Activated CD4-positive, alpha-beta T cell treated with anti-CD3 and anti-CD28 coated beads, Interleukin-2, amount 10 ng/mL, durations not matched to agents 7 days and 5 days (primary cell): ENCODE measurements at regions of chr22 and their contacts with region 1.

Region 1: GRCh38 chr22:21629262-21630149 is at the start of gene YDJC:
- DNase-seq: peak; percentile 95
- H3K4me3 Mint-ChIP-seq: peak within 1 kb of the TSS; percentile 89
- H3K27ac Mint-ChIP-seq: peak within 1 kb of the TSS; percentile 96
- H3K4me1 Mint-ChIP-seq: peaks cover 42% of the 10 kb centered on the region
- H3K27me3 Mint-ChIP-seq: no peaks in the 10 kb centered on the region
- total RNA-seq, gene YDJC: 30.3 to 39.9 TPM

Region 2: GRCh38 chr22:21612865-21613265 is 16.6 kb before region 1 on chr22:
- CTCF ChIA-PET with region 1: interaction called, 24 read pairs
- POLR2A ChIA-PET with region 1: no interaction called
- DNase-seq: no peak
- H3K4me3 Mint-ChIP-seq: no peak overlapping the region
- H3K27ac Mint-ChIP-seq: no peak overlapping the region
- H3K4me1 Mint-ChIP-seq: peaks cover 2% of the 10 kb centered on the region
- H3K27me3 Mint-ChIP-seq: no peaks in the 10 kb centered on the region

Region 3: DNA sequence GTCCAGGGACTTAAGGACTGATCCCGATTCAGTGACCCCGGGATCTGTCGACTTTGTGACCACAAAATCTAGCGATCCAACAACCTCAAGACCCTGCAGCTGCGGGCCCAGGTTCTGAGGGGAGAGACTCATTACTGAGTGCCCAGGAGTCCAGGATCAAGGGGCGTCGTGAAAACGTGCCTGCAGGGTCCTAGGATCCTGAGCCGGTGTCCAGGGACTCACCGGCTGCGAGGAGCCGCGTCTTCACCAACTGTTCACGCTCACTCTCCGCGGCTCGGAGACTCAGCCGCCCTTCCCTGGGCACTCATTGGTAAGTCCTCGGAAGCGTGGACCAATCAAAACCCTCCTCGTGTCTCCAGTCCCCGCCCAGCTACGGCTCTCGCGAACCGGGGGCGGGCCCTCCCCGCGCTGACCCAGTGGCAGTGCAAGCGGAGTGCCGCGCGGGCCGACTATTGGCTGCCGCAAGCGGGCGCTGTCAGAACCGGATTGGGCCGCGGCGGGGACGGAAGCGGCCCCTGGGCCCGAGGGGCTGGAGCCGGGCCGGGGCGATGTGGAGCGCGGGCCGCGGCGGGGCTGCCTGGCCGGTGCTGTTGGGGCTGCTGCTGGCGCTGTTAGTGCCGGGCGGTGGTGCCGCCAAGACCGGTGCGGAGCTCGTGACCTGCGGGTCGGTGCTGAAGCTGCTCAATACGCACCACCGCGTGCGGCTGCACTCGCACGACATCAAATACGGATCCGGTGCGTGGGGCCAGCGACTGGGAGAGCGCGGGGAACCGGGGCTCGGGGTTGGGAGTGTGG is 12.5 kb after region 1 on chr22 and contains the start of gene SDF2L1:
- CTCF ChIA-PET with region 1: interaction called, 213 read pairs
- POLR2A ChIA-PET with region 1: interaction called, 9 read pairs
- DNase-seq: peak; percentile 99
- H3K4me3 Mint-ChIP-seq: peak within 1 kb of the TSS; percentile 89
- H3K27ac Mint-ChIP-seq: peak within 1 kb of the TSS; percentile 95
- H3K4me1 Mint-ChIP-seq: peaks cover 35% of the 10 kb centered on the region
- H3K27me3 Mint-ChIP-seq: peaks cover 2% of the 10 kb centered on the region
- total RNA-seq, gene SDF2L1: 39.7 to 59.4 TPM

Region 4: DNA sequence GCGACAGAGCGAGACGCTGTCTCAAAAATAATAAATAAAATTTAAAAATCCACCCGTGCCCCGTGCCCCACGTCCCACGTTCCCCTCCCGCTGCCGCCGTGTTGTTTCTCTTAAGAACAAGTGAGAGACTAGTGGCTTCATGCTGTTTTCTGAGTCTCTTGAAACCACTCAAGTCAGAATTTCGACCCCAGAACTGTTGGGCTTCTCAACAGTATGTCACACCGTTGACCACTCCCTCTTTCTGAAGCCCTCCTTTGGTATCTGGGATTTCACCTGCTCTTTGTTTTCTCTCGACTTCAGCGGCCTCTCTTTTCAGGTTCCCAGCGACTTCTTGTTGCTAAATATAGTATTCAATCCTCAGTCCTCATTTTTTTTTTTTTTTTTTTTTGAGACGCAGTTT is 37.3 kb after region 1 on chr22:
- CTCF ChIA-PET with region 1: interaction called, 11 read pairs
- POLR2A ChIA-PET with region 1: no interaction called
- DNase-seq: no peak
- H3K4me3 Mint-ChIP-seq: peak overlapping the region; percentile 98
- H3K27ac Mint-ChIP-seq: peak overlapping the region; percentile 90
- H3K4me1 Mint-ChIP-seq: peaks cover 30% of the 10 kb centered on the region
- H3K27me3 Mint-ChIP-seq: no peaks in the 10 kb centered on the region

Region 5: DNA sequence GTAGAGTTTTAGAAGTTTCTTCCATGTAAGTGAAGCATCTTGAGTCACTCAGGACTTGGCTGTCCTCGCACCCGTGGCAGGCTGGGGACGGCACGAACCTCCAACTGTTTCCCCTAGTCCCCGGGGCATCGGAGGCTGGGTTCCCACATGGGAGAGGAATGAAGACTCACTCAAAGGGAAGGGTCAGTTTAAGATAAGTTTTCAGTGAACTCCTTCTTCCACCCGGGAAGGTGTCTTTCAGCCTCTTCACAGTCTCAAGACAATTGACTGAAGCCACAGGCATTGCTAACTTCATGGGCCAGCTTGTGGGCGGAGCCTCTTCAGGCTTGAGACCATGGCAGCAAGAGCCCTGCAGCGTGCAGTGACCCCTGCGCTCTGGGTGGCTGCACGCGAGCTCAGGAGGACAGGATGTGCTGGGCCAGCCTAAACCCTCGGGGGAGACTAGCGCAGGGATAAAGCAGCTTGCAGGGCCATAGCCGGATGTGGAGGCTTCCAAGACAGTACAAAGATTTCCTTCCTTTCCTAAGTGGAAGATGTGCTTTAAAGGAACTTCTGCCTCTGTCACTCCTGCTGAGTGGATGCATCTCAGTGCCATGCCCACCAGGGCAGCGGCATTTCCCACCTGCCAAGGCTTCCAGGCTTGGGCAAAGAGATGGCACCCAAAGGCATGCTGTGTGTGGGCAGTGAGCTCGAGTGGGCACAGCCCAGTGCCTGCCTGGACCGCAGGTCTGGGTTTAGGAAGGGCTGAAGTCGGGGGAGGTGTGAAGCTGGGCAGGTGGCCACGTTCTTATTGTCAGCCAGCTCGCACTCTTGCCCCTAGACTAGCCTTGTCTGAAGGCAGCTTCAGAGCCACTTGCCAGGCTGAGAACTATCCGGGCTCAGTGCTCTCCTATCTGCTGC is 69.2 kb after region 1 on chr22:
- CTCF ChIA-PET with region 1: no interaction called
- POLR2A ChIA-PET with region 1: no interaction called
- DNase-seq: no peak
- H3K4me3 Mint-ChIP-seq: no peak overlapping the region
- H3K27ac Mint-ChIP-seq: no peak overlapping the region
- H3K4me1 Mint-ChIP-seq: no peaks in the 10 kb centered on the region
- H3K27me3 Mint-ChIP-seq: no peaks in the 10 kb centered on the region